ENCODE measurements at regions of chr12 and their contacts with region 1.

Region 1: DNA sequence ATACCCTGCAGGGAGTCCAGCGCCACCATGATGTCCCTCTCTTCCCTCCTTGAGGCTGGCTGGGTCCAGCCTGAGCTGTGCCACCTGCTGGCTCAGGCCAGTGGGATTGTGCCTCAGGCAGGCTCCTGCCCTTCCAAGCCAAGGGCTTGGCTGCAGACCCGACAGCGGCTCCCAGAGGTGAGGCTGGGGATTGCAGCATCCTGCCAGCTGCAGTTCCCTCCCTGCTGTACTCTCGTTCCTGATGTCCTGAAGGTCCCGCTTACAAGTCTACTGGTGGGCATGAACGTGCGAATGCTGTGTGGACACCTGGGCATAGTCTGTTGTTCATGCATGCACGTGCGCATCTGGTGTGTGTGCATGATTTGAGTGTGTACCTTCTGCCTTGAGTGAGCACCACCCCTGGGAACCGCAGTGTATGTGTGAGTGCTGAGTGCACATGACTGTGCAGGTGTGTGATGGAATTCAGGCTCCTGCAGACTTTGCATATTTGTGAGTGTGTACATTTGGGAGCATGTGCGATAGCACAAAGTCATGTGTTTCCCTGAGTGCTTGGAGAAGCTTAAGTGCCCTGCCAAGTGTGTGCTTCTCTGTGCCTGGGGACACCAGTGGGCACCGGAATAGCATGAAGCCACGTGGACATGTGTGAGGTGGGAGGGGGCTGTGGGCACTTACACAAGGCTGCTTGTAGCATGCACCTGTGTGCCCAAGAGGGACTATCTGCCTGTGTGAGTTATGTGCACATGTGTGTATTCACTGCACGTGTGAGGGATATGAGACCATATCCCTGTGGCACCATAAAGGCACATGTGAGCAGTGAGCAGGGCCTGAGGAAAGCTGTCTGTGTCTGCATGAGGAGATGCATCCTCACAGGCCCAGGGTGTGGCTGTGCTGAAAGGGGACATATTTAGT is 19.3 kb upstream of the KRT7 start:
- DNase-seq: peak; percentile 79
- H3K4me3 ChIP-seq: no peak overlapping the region
- H3K27ac ChIP-seq: no peak overlapping the region
- H3K4me1 ChIP-seq: peaks cover 73% of the 10 kb centered on the region
- H3K27me3 ChIP-seq: no peaks in the 10 kb centered on the region
- CTCF ChIP-seq: peak; percentile 98 to 100

Region 2: DNA sequence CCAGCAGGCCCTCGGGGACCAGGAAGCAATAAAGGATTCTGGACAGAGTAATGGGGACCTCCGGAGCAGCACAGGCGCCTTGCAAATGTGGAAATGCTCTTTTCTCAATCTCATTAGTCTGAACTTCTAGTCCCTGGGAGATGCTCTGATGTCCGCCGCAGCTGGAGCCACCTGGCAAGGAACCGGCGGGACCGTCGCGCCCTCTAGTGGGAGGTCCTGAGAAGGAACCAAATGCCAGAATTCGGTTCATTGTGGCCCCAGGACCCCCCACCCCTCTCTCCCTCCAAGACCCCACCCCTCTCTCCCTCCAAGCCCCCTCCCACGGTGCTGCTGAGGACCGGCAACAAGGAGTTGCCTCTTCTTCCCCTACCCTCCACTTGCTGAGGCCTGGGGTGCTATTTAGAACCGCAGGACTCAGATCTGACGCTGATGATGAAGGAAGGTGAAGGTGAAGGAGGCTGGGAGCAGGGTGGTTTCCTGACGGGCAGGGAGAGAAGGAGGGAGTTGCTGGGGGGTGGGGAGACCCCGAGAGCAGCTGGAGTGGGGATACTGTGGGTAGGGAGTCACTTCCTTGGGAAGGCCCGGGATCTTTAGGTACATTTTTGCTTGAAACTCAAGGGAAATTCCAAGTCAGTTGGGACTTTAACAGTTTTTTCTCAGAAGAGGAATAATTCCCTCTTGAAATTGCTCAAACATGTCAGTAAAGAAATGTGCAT is 91.8 kb before region 1 on chr12:
- CTCF ChIA-PET with region 1: no interaction called
- dilution Hi-C with region 1: loop called (anchors 5 kb)
- in situ Hi-C with region 1: no loop called
- intact Hi-C with region 1: no loop called
- DNase-seq: no peak
- H3K4me3 ChIP-seq: no peak overlapping the region
- H3K27ac ChIP-seq: no peak overlapping the region
- H3K4me1 ChIP-seq: peaks cover 5% of the 10 kb centered on the region
- H3K27me3 ChIP-seq: no peaks in the 10 kb centered on the region
- CTCF ChIP-seq: peak; percentile 69 to 82

Region 3: DNA sequence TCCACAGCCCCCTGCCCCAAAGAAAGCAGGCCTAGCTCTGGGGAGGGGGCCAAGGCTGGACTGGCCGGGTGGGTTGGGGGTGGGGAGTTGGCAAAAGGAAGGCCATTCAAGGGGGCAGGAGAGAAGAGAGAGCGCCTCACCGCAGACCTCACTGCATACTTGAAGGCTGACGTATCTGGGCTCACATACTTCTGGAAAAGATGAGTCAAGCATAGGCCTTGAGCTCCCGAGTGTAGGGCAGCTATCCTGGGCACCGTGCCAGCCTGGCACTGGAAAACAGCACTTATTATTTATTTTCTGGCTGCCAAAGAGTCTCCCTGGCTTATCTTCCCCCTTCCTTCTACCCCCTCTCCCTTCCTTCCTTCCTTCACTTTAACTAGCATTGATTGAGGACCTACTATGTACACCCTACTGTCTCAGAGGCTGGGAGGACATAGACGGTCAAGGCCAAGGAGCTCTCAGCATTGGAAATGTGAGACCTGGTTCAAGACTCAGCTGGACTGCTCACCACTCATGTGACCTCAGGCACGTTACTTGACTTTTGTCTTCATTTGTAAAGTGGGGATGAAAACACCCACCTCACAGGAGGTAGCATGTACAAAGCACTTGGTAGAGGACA is 21.5 kb before region 1 on chr12:
- CTCF ChIA-PET with region 1: interaction called, 3 read pairs
- dilution Hi-C with region 1: no loop called
- in situ Hi-C with region 1: no loop called
- intact Hi-C with region 1: loop called (anchors 1 kb)
- DNase-seq: peak; percentile 97
- H3K4me3 ChIP-seq: no peak overlapping the region
- H3K27ac ChIP-seq: peak overlapping the region; percentile 51
- H3K4me1 ChIP-seq: peaks cover 57% of the 10 kb centered on the region
- H3K27me3 ChIP-seq: no peaks in the 10 kb centered on the region
- CTCF ChIP-seq: no peak

Region 4: GRCh38 chr12:52243856-52244614 is 30.3 kb after region 1 on chr12:
- CTCF ChIA-PET with region 1: no interaction called
- dilution Hi-C with region 1: loop called (anchors 5 kb)
- in situ Hi-C with region 1: no loop called
- intact Hi-C with region 1: loop called (anchors 1 kb)
- DNase-seq: peak; percentile 96
- H3K4me3 ChIP-seq: no peak overlapping the region
- H3K27ac ChIP-seq: peak overlapping the region; percentile 72
- H3K4me1 ChIP-seq: peaks cover 52% of the 10 kb centered on the region
- H3K27me3 ChIP-seq: no peaks in the 10 kb centered on the region
- CTCF ChIP-seq: no peak

Region 5: DNA sequence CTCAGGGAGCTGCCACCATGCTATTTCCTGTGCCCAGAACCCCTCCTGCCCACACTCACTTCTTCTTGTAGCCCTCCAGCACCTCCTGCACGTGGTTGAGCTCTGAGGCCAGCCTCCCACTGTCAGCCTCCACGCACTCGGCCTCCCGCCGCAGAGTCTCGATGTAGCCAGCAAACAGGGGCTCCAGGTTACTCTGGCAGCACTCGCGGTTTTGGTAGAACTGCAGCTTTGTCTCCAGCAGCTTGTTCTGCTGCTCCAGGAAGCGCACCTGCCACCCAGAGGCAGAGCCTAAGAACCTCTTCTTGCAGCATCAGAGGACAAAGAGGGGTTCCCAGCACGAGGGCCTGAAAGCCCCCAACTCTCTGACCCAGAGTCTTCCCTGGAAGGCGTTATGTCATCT is 105.3 kb after region 1 on chr12:
- CTCF ChIA-PET with region 1: no interaction called
- dilution Hi-C with region 1: no loop called
- in situ Hi-C with region 1: no loop called
- intact Hi-C with region 1: loop called (anchors 2 kb)
- DNase-seq: no peak
- H3K4me3 ChIP-seq: no peak overlapping the region
- H3K27ac ChIP-seq: no peak overlapping the region
- H3K4me1 ChIP-seq: no peaks in the 10 kb centered on the region
- H3K27me3 ChIP-seq: no peaks in the 10 kb centered on the region
- CTCF ChIP-seq: peak in 1 of 2 donors; percentile 47

Region 6: DNA sequence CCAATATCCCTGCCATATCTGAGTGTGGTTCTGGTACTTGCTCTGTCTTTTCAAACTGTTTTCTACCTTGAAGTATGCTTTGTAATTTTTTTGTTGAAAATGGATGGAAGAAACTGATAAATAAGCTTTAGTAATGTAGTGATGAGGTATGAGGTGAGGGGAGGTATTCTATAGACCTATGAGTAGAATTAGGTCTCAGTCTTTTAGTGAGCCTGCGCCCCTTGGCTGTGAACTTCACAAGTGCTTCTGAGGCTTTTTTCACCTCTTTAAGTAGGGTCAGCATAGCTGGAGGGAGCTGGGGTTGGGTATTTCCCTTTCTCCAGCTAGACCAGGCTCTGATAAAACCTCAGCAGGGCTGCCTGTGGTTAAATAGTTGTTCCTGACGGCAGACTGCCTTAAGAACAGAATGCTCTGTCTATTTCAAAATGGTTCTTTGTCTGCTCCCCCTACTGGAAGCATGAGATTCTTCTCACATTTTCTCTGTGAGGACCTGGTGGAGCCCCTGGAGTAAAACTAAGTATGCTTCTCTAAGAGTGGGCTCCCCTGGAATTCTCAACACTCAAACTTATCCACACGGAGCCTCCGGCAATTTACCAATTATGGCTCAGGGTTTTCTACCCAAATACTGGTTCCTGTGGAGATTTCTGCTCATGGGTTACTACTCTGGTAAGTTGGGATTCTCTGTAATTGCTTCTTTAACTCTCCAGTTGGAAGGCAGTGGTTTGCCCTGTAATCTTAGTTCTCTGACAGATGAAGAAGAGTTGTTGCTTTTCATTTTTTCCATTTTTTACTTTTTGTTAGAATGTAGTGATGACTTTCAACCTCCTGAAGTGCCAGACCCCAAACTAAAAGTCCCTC is 293.3 kb after region 1 on chr12:
- CTCF ChIA-PET with region 1: no interaction called
- dilution Hi-C with region 1: loop called (anchors 10 kb)
- in situ Hi-C with region 1: no loop called
- intact Hi-C with region 1: no loop called
- DNase-seq: peak; percentile 82
- H3K4me3 ChIP-seq: no peak overlapping the region
- H3K27ac ChIP-seq: peak overlapping the region; percentile 40
- H3K4me1 ChIP-seq: peaks cover 21% of the 10 kb centered on the region
- H3K27me3 ChIP-seq: no peaks in the 10 kb centered on the region
- CTCF ChIP-seq: peak; percentile 58 to 72